PC-9 (cell line): ENCODE measurements at regions of chr1 and their contacts with region 1.

Region 1: GRCh38 chr1:244322791-244323521 is 128.8 kb downstream of the ADSS2 start:
- DNase-seq: peak; percentile 68 to 96
- H3K4me3 ChIP-seq: peak overlapping the region; percentile 52
- H3K27ac ChIP-seq: peak overlapping the region; percentile 96
- H3K4me1 ChIP-seq: peaks cover 45% of the 10 kb centered on the region
- H3K27me3 ChIP-seq: no peaks in the 10 kb centered on the region
- CTCF ChIP-seq: no peak

Region 2: GRCh38 chr1:244341455-244342450 is 18.8 kb after region 1 on chr1:
- CTCF ChIA-PET with region 1: no interaction called
- POLR2A ChIA-PET with region 1: interaction called, 5 read pairs
- intact Hi-C with region 1: loop called (anchors 1 kb)
- DNase-seq: peak in 1 of 2 experiments; percentile 64
- H3K4me3 ChIP-seq: no peak overlapping the region
- H3K27ac ChIP-seq: peak overlapping the region; percentile 38; the same call in 1 of the 2 replicates
- H3K4me1 ChIP-seq: peaks cover 13% of the 10 kb centered on the region
- H3K27me3 ChIP-seq: no peaks in the 10 kb centered on the region
- CTCF ChIP-seq: no peak

Region 3: GRCh38 chr1:244353551-244354091 is 30.7 kb after region 1 on chr1:
- CTCF ChIA-PET with region 1: no interaction called
- POLR2A ChIA-PET with region 1: no interaction called
- intact Hi-C with region 1: no loop called
- DNase-seq: peak; percentile 73 to 91
- H3K4me3 ChIP-seq: no peak overlapping the region
- H3K27ac ChIP-seq: peak overlapping the region; percentile 78
- H3K4me1 ChIP-seq: peaks cover 16% of the 10 kb centered on the region
- H3K27me3 ChIP-seq: no peaks in the 10 kb centered on the region
- CTCF ChIP-seq: no peak

Region 4: DNA sequence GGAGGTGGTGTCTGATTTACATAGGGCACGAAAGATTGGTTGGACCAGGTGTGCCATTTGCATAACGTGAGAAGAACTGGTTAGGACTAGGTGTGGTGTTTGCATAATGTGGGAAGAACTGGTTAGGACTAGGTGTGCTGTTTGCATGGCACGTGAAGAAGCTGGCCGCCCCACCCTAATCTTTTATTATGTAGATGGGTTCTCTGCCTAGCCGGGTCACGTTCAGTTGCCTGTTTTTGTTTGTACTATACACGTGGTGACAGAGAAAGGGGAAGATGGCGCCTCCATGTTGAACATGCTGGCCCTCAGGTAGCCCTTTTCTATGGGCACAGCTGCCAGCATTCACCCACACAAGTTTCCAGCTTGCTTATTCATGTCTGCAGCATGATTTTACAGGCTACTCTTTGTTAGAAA is 46.7 kb after region 1 on chr1:
- CTCF ChIA-PET with region 1: no interaction called
- POLR2A ChIA-PET with region 1: no interaction called
- intact Hi-C with region 1: no loop called
- DNase-seq: no peak
- H3K4me3 ChIP-seq: no peak overlapping the region
- H3K27ac ChIP-seq: no peak overlapping the region
- H3K4me1 ChIP-seq: no peaks in the 10 kb centered on the region
- H3K27me3 ChIP-seq: no peaks in the 10 kb centered on the region
- CTCF ChIP-seq: no peak